ENCODE measurements at regions of chr19 and their contacts with region 1.

Region 1: DNA sequence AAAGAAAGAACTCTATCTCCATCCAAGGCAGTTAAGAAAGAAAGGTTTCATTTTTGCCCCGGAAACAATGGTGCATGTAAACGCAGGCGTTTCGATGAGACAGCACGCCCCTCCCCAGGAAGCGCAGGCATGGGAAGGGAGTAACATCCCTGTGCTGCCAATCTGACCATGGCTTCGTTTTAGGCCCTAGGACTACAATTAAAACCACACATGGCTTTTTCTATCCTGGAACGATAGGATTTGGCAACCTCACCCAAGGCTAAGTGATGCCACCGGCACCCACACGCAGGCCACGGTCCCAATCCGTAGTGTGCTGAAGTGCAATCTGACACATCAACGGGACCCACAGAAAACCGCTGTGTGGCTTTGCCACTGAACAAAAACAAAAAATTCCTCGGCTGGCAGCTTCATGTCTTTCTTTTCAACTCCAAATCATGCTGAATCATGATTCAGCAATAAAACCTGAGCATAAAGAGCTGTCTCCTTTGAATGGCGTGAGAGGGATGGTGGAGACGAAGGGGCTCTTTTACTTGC is 24.2 kb downstream of the RANBP3 start:
- DNase-seq: no peak
- H3K4me3 ChIP-seq: no peak overlapping the region; a peak in 1 of 8 replicates
- H3K27ac ChIP-seq: no peak overlapping the region
- H3K4me1 ChIP-seq: peaks cover 33 to 64% (median 50%) of the 10 kb centered on the region in 4 experiments
- H3K27me3 ChIP-seq: no peaks in the 10 kb centered on the region; a peak in 1 of 7 replicates
- CTCF ChIP-seq: no peak
- EP300 ChIP-seq: no peak
- POLR2A ChIP-seq: no peak
- RAD21 ChIP-seq: no peak

Region 2: GRCh38 chr19:5913739-5914357 is 39.9 kb before region 1 on chr19 and contains the start of gene CAPS:
- CTCF ChIA-PET with region 1: no interaction called
- POLR2A ChIA-PET with region 1: no interaction called
- DNase-seq: no peak
- H3K4me3 ChIP-seq: no peak within 1 kb of the TSS
- H3K27ac ChIP-seq: no peak within 1 kb of the TSS
- H3K4me1 ChIP-seq: no peaks in the 10 kb centered on the region
- H3K27me3 ChIP-seq: no peaks in the 10 kb centered on the region
- CTCF ChIP-seq: no peak
- EP300 ChIP-seq: no peak
- POLR2A ChIP-seq: no peak
- RAD21 ChIP-seq: no peak
- total RNA-seq, gene CAPS: 1.8 and 2.1 TPM in 2 replicates

Region 3: GRCh38 chr19:5977785-5978605 is 24.2 kb after region 1 on chr19 and contains the start of gene RANBP3:
- CTCF ChIA-PET with region 1: interaction called, 3 read pairs
- POLR2A ChIA-PET with region 1: interaction called, 13 read pairs
- DNase-seq: peak; percentile 96 to 99
- H3K4me3 ChIP-seq: peak within 1 kb of the TSS; percentile 85 to 97 (median 89)
- H3K27ac ChIP-seq: peak within 1 kb of the TSS; percentile 94
- H3K4me1 ChIP-seq: peaks cover 0 to 13% (median 7%) of the 10 kb centered on the region in 4 experiments; a peak in 5 of 7 replicates
- H3K27me3 ChIP-seq: no peaks in the 10 kb centered on the region
- CTCF ChIP-seq: no peak
- EP300 ChIP-seq: no peak
- POLR2A ChIP-seq: peak in 1 of 2 experiments; percentile 90; a peak in 2 of 3 replicates
- RAD21 ChIP-seq: no peak
- total RNA-seq, gene RANBP3: 87.0 and 95.4 TPM in 2 replicates